ENCODE measurements at regions of chr3 and their contacts with region 1.

Region 1: GRCh38 chr3:150721285-150722130 is 17.8 kb upstream of the ERICH6 start:
- H3K4me3 Mint-ChIP-seq: no peak overlapping the region
- H3K27ac Mint-ChIP-seq: no peak overlapping the region
- H3K4me1 Mint-ChIP-seq: peaks cover 9% of the 10 kb centered on the region
- H3K27me3 Mint-ChIP-seq: no peaks in the 10 kb centered on the region

Region 2: GRCh38 chr3:150710097-150710496 is 11.4 kb before region 1 on chr3:
- intact Hi-C with region 1: no loop called
- H3K4me3 Mint-ChIP-seq: no peak overlapping the region
- H3K27ac Mint-ChIP-seq: no peak overlapping the region
- H3K4me1 Mint-ChIP-seq: no peaks in the 10 kb centered on the region
- H3K27me3 Mint-ChIP-seq: peaks cover 7% of the 10 kb centered on the region

Region 3: DNA sequence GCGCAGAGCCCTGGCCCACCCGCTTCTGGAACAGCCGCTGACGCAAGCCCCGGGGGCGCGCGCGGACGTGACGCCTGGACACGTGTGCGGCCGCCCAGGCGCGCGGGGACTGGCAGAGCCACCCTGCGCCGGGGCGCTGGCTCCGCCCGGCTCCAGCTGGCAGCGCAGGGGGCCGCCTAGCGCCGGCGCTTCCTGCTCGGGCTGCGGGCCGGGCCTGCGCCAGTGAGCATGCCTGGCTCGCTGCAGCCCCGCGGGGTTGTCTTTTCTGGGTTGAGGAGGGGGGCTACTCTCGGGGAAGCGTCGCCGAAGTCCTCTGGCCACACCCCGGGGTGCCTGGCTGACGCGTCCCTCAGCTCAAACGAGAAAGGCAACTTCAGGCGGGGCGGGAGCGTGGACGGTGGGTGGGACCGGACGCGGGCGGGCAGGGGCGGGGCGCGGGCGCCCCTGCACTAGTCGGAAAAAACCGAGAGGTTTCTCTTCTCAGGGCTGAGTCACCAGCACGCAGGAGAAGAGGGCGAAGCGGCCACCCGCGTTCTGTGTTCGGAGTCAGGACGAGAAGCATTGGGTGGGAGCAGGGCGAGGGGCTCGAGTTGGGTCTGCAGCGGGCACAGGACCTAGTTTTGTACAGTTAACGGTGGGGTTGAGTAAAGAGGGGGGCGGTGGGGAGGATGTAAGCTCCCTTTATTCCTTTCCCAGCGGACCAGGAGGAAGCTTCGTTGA is 41.8 kb after region 1 on chr3 and contains the start of gene SIAH2:
- intact Hi-C with region 1: loop called (anchors 5 kb)
- H3K4me3 Mint-ChIP-seq: peak within 1 kb of the TSS; percentile 94
- H3K27ac Mint-ChIP-seq: peak within 1 kb of the TSS; percentile 98
- H3K4me1 Mint-ChIP-seq: peaks cover 35% of the 10 kb centered on the region
- H3K27me3 Mint-ChIP-seq: no peaks in the 10 kb centered on the region

Region 4: GRCh38 chr3:150787741-150788370 is 66.3 kb after region 1 on chr3:
- intact Hi-C with region 1: loop called (anchors 5 kb)
- H3K4me3 Mint-ChIP-seq: no peak overlapping the region
- H3K27ac Mint-ChIP-seq: no peak overlapping the region
- H3K4me1 Mint-ChIP-seq: peaks cover 5% of the 10 kb centered on the region
- H3K27me3 Mint-ChIP-seq: peaks cover 12% of the 10 kb centered on the region

Region 5: GRCh38 chr3:150870396-150870795 is 148.9 kb after region 1 on chr3:
- intact Hi-C with region 1: loop called (anchors 1 kb)
- H3K4me3 Mint-ChIP-seq: no peak overlapping the region
- H3K27ac Mint-ChIP-seq: no peak overlapping the region
- H3K4me1 Mint-ChIP-seq: peaks cover 9% of the 10 kb centered on the region
- H3K27me3 Mint-ChIP-seq: peaks cover 4% of the 10 kb centered on the region